RWPE1 (cell line): ENCODE measurements at regions of chr4 and their contacts with region 1.

Region 1: DNA sequence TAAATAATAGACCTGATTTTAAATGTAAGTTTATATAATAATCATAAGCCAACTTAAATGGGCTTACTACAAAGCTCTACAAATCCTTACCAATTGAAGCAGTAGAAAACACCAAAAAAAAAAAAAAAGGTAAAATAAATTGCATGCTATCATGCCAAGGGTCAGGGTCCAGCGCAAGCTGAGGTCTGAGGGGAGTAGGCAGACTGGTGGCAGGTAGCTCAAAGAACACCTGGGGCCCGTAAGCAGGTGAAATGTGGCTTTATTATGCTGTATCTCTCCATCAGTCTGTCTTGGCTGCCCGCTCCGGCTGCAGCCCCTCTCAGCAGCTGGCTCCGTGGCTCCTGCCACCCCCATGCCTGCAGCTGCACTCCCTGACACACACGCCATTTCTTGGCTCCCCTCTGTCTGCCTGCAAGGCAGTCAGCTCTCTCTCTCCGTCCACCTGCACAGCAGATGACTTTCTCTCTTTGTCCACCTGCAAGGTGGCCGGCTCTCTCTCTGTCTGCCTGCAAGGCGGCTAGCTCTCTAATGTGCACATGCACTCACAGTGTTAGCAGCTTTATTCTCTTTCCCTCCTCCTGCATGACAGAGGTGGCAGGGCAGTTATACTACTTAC is 209.4 kb upstream of the UGT8 start:
- DNase-seq: no peak
- H3K27ac ChIP-seq: no peak overlapping the region
- CTCF ChIP-seq: no peak

Region 2: DNA sequence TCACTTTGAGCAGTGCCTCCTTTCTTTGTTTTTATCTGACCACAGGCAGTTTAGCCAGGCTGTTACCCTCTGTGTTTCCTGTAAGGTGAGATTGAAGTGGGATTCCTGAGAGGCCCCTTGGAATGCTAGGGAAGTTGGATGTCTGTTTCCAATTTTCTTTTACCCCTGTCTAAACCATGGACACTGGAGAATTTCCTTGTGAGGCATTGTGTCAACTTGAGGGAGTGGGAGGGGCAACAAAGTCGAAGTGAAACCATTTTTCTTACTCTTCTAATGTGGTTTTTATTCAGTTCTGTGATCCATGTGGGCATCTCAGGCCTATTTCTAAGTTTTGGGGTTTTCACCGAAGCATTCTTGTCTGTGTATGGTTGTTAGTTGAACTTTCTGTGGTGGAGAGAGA is 86.7 kb before region 1 on chr4:
- CTCF ChIA-PET with region 1: no interaction called
- POLR2A ChIA-PET with region 1: no interaction called
- DNase-seq: no peak
- H3K27ac ChIP-seq: no peak overlapping the region
- CTCF ChIP-seq: no peak

Region 3: GRCh38 chr4:114563536-114564315 is 174.5 kb after region 1 on chr4:
- CTCF ChIA-PET with region 1: no interaction called
- POLR2A ChIA-PET with region 1: no interaction called
- DNase-seq: no peak
- H3K27ac ChIP-seq: no peak overlapping the region
- CTCF ChIP-seq: no peak

Region 4: DNA sequence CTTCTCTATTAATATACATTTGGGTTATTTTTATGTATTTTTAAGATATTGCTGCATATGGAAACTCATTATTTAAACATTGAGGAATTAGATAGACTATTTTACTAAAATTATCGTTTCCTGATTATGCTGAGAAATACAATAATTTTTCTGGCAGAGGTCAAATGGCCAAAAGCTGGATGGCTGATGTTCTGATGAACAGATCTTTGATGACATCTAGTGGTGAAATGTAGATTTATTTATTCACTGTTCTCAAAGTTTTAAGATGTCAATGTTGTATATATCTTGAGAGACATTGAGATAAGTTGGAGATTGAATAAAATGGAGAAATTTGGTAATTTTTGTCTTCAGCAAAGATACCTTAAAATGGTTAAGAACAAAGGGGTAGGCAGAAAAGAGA is 305.6 kb after region 1 on chr4:
- CTCF ChIA-PET with region 1: interaction called, 12 read pairs
- POLR2A ChIA-PET with region 1: no interaction called
- DNase-seq: peak; percentile 7
- H3K27ac ChIP-seq: no peak overlapping the region
- CTCF ChIP-seq: peak; percentile 65